PC-9 (cell line): ENCODE measurements at regions of chr20 and their contacts with region 1.

Region 1: GRCh38 chr20:56795492-56795891 is 166.4 kb downstream of the TFAP2C start:
- DNase-seq: no peak
- H3K4me3 ChIP-seq: no peak overlapping the region
- H3K27ac ChIP-seq: no peak overlapping the region
- H3K4me1 ChIP-seq: peaks cover 21% of the 10 kb centered on the region
- H3K27me3 ChIP-seq: no peaks in the 10 kb centered on the region
- CTCF ChIP-seq: no peak

Region 2: DNA sequence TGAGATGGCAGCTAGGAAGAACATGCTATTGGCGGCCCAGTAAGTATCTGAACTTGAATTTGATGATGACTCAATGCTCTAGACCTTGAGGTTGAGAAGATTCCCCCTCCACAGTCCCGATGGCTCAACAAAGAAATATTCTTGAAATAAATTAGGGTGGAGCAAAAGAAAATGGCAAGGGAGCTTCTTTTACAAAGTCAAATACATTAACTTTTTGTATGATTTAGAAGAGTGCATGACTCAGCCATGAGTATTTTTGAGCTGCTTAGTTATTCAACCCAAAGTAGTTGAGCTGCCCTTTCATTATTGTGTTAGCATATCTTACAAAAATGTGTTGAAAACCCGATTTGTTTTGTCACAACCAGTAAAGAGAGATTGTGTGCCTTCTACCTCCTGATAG is 158.8 kb before region 1 on chr20:
- CTCF ChIA-PET with region 1: no interaction called
- POLR2A ChIA-PET with region 1: no interaction called
- intact Hi-C with region 1: no loop called
- DNase-seq: no peak
- H3K4me3 ChIP-seq: no peak overlapping the region
- H3K27ac ChIP-seq: no peak overlapping the region
- H3K4me1 ChIP-seq: peaks cover 19% of the 10 kb centered on the region
- H3K27me3 ChIP-seq: no peaks in the 10 kb centered on the region
- CTCF ChIP-seq: no peak

Region 3: DNA sequence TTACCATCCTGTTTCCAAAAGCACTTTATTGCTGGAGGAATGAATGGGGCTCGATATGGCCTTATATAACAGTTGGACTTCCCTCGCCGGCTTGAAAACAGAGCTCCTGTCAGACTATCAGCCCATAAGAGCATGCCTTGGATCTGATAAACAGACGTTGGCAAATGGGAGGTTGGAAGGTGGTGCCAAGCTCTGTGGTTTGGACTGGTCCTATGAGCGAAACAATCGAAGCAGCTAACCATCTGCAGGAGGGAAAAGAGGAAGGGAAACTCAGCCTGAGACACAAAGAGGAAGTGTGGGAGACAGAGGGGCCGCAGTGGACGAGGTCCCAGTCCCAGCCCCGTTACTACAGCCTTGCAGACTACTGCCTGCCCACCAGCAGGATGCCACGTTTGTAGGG is 73.5 kb before region 1 on chr20:
- CTCF ChIA-PET with region 1: no interaction called
- POLR2A ChIA-PET with region 1: no interaction called
- intact Hi-C with region 1: no loop called
- DNase-seq: no peak
- H3K4me3 ChIP-seq: no peak overlapping the region
- H3K27ac ChIP-seq: no peak overlapping the region
- H3K4me1 ChIP-seq: no peaks in the 10 kb centered on the region
- H3K27me3 ChIP-seq: no peaks in the 10 kb centered on the region
- CTCF ChIP-seq: no peak

Region 4: DNA sequence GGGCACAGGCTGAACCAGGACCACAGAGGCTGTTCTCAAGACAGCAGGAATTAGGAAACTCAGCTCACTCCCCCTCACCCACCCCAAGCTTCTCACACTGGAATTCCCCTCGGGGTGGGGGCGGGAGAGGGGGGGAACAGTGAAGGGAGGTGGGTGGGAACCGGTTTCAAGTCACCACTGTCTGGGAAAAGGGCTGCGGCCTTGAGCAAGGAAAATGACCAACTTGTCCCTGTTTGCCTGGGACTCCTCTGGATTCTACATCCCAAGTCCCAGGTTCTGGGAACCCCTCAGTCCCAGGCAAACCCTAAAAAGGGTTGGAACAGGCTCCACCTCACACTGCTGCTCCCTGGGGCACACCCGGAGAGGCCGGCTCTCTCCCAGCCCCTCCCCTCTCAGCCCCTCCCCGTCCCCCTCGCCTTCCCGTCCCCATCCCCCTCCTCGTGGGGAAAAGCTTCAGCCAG is 64.3 kb after region 1 on chr20:
- CTCF ChIA-PET with region 1: no interaction called
- POLR2A ChIA-PET with region 1: interaction called, 14 read pairs
- intact Hi-C with region 1: no loop called
- DNase-seq: no peak
- H3K4me3 ChIP-seq: no peak overlapping the region
- H3K27ac ChIP-seq: no peak overlapping the region
- H3K4me1 ChIP-seq: no peaks in the 10 kb centered on the region
- H3K27me3 ChIP-seq: peaks cover 13% of the 10 kb centered on the region; the same call in 1 of the 2 replicates
- CTCF ChIP-seq: no peak